ENCODE measurements at regions of chr5 and their contacts with region 1.

Region 1: GRCh38 chr5:41869739-41870626 is at the start of gene OXCT1:
- DNase-seq: peak; percentile 92
- H3K4me3 Mint-ChIP-seq: peak within 1 kb of the TSS; percentile 94
- H3K27ac Mint-ChIP-seq: peak within 1 kb of the TSS; percentile 96
- H3K4me1 Mint-ChIP-seq: peaks cover 56% of the 10 kb centered on the region
- H3K27me3 Mint-ChIP-seq: no peaks in the 10 kb centered on the region
- total RNA-seq, gene OXCT1: 84.4 and 85.1 TPM in 2 replicates

Region 2: DNA sequence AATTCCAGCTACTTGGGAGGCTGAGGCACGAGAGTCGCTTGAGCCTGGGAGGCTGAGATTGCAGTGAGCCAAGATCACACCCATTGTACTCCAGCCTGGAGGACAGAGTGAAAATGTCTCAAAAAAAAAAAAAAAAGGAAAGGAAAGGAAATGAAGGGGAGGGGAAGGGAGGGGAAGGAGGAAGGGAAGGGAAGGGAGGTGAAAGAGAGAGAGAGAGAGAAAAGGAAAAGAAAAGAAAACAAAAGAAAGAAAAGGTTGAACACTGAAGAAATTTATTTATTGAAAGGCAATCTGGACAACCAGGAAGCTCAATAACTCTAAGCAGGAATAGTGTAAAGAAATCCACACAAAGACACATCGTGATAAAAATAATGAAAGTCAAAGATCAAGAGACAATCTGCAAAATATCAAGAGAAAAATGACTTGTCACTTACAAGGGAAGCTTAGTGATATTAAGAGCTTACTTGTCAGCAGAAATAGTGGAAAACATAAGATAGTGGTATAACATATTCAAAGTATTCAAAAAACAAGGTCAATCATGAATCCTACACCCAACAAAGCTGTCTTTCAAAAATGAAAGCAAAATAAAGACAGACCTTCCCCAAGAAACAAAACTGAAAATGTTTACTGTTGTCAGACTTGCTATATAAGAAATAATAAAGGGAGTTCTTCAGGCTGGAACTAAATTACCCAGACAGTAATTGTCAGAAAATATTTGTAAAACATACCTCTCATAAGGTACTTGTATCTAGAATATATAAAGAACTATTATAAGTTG is 23.3 kb after region 1 on chr5:
- intact Hi-C with region 1: loop called (anchors 1 kb)
- DNase-seq: no peak
- H3K4me3 Mint-ChIP-seq: peak overlapping the region; percentile 38
- H3K27ac Mint-ChIP-seq: peak overlapping the region; percentile 4
- H3K4me1 Mint-ChIP-seq: peaks cover 24% of the 10 kb centered on the region
- H3K27me3 Mint-ChIP-seq: peaks cover 19% of the 10 kb centered on the region

Region 3: GRCh38 chr5:41903892-41904799 is 34.2 kb after region 1 on chr5 and contains the start of gene RIMOC1:
- intact Hi-C with region 1: loop called (anchors 1 kb)
- DNase-seq: peak; percentile 98
- H3K4me3 Mint-ChIP-seq: peak within 1 kb of the TSS; percentile 99
- H3K27ac Mint-ChIP-seq: peak within 1 kb of the TSS; percentile 100
- H3K4me1 Mint-ChIP-seq: peaks cover 54% of the 10 kb centered on the region
- H3K27me3 Mint-ChIP-seq: peaks cover 10% of the 10 kb centered on the region
- total RNA-seq, gene RIMOC1: 28.0 and 29.0 TPM in 2 replicates

Region 4: DNA sequence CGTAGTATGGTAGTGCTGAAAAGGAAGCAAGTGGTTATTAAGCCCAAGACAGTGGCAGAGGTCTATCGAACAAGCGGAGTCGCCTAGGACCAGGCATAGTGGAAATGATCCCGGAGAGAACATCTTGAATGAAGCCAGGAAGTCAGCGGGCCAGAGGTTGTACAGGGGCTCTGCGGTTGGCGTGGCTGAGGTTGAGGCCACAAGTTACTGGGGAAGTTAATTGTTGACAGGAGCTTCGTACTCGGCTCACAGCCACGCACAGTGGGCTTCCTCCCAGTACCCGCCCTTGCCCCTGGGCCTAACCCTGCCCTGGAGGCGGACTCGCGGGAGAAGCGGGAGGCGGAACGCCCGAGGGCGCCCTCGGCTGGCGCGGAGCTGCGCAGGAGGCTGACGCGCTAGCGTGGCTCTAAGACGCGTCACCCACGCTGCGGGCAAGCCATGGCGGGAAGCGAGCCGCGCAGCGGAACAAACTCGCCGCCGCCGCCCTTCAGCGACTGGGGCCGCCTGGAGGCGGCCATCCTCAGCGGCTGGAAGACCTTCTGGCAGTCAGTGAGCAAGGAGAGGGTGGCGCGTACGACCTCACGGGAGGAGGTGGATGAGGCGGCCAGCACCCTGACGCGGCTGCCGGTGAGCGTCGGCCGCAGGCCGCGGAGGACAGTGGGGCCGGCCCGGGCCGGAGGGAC is 55.0 kb after region 1 on chr5 and contains the start of gene FBXO4:
- intact Hi-C with region 1: loop called (anchors 1 kb)
- DNase-seq: peak; percentile 87
- H3K4me3 Mint-ChIP-seq: peak within 1 kb of the TSS; percentile 91
- H3K27ac Mint-ChIP-seq: peak within 1 kb of the TSS; percentile 98
- H3K4me1 Mint-ChIP-seq: peaks cover 13% of the 10 kb centered on the region
- H3K27me3 Mint-ChIP-seq: no peaks in the 10 kb centered on the region
- total RNA-seq, gene FBXO4: 14.1 and 17.8 TPM in 2 replicates

Region 5: DNA sequence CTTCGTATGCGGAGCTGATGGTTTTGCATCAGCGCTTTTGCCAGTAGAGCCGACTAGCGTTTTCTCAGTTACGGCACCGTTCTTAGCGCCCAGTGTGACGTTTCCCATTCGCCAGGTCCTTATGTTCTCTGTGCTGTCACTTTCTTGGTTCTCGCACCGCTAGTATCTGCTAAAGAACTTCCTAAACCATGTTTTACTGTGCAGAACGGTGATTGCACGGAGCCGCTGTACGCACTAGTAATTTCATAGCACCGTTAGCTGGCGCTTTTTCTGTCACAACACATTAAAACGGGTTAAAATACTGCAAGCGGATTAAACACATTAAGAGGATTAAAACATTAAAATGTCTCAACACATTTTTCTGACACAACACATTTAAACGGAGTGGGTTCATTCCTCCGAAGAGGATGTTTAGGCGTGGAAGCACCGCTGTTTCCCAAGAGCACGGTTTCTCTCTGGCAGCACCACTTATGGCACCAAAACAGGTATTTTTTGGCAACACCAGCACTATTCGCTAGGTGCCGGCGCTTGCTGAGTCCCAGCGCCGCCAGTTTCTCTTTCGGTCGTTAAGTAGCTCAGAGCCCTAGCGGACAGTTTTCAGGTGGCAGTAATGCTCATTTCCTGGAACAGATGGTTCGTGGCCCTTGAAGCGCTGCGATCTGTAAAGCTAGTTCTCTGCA is 1149.8 kb after region 1 on chr5:
- intact Hi-C with region 1: loop called (anchors 10 kb)
- DNase-seq: peak; percentile 83
- H3K4me3 Mint-ChIP-seq: peak overlapping the region; percentile 90
- H3K27ac Mint-ChIP-seq: peak overlapping the region; percentile 97
- H3K4me1 Mint-ChIP-seq: peaks cover 43% of the 10 kb centered on the region
- H3K27me3 Mint-ChIP-seq: no peaks in the 10 kb centered on the region